ENCODE measurements at regions of chr3 and their contacts with region 1.

Region 1: GRCh38 chr3:55485211-55485791 is 1.8 kb downstream of the WNT5A start:
- DNase-seq: peak in 1 of 2 experiments; percentile 79
- H3K4me3 ChIP-seq: peak overlapping the region; percentile 58; the same call in 1 of the 2 replicates
- H3K27ac ChIP-seq: peak overlapping the region; percentile 73
- H3K4me1 ChIP-seq: peaks cover 6% of the 10 kb centered on the region
- H3K27me3 ChIP-seq: no peaks in the 10 kb centered on the region
- CTCF ChIP-seq: peak; percentile 27

Region 2: DNA sequence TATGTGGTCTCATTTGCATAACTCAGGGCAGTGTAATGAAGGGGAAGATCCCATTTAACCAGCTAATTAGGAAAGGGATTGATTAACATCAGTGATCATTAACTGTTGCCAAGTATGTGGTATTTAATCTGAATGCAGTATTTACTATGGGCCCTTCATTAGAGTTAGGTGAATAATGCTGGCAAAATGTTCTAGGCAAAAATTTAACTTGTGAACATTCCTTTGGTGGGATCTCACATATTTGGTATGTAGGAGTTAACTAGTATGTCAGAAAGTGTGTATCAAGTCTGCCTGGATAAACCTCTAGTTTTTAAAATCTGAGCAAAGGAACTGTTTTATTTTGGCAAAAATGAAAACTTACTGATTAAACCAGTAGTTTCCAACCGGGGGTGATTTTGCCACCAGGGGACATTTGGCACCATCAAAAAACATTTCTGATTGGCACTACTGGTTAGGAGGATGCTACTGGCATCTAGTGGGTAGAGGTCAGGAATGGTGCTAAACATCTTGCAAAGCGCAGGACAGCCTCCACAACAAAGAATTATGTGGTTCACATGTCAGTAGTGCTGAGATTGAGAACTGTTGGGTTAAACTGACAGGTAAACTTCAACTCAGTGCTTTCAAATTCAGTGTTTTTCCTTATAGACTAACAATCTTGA is 579.9 kb before region 1 on chr3:
- CTCF ChIA-PET with region 1: no interaction called
- POLR2A ChIA-PET with region 1: no interaction called
- intact Hi-C with region 1: no loop called
- DNase-seq: no peak
- H3K4me3 ChIP-seq: no peak overlapping the region
- H3K27ac ChIP-seq: no peak overlapping the region
- H3K4me1 ChIP-seq: no peaks in the 10 kb centered on the region
- H3K27me3 ChIP-seq: no peaks in the 10 kb centered on the region
- CTCF ChIP-seq: no peak

Region 3: GRCh38 chr3:54951405-54951804 is 533.9 kb before region 1 on chr3:
- CTCF ChIA-PET with region 1: no interaction called
- POLR2A ChIA-PET with region 1: no interaction called
- intact Hi-C with region 1: loop called (anchors 2 kb)
- DNase-seq: peak in 1 of 2 experiments; percentile 42
- H3K4me3 ChIP-seq: no peak overlapping the region
- H3K27ac ChIP-seq: no peak overlapping the region
- H3K4me1 ChIP-seq: peaks cover 17% of the 10 kb centered on the region
- H3K27me3 ChIP-seq: no peaks in the 10 kb centered on the region
- CTCF ChIP-seq: 0 out of 2 replicates have a peak, but pooled peaks have one; percentile 33

Region 4: GRCh38 chr3:55362210-55362960 is 122.9 kb before region 1 on chr3:
- CTCF ChIA-PET with region 1: no interaction called
- POLR2A ChIA-PET with region 1: interaction called, 7 read pairs
- intact Hi-C with region 1: loop called (anchors 2 kb)
- DNase-seq: peak; percentile 23 to 85
- H3K4me3 ChIP-seq: no peak overlapping the region
- H3K27ac ChIP-seq: peak overlapping the region; percentile 60
- H3K4me1 ChIP-seq: peaks cover 29% of the 10 kb centered on the region
- H3K27me3 ChIP-seq: no peaks in the 10 kb centered on the region
- CTCF ChIP-seq: no peak

Region 5: DNA sequence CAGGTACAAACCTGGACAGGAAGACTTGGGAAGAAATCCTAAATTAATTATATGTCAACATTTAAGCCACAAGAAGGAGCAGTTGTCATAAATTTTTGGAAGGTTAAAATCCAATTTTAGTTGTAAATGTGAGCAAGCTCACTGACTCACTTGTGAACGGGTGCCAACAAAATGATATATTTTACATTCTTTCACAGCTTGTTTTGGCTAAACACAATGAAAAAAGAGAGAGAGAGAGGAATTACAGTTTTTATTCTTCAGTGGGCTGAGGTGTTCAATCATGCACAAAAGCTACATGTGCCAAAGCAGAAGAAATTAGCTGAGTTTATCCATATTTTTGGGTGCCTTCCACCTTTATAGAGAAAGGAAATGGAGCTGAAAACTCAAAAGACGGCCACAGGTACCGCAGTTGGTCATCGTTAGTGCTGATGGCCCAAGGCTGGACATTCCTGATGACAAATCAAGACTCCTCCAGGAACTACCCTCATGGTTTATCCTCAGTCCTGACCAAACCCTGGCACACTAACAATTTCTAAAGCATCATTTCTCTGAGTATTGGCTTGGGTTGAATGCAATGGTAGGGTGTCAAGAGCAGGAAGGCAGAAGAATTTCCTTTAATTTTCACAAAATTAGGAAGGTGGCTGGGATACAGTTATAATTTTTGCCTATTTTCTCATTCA is 39.4 kb after region 1 on chr3:
- CTCF ChIA-PET with region 1: no interaction called
- POLR2A ChIA-PET with region 1: interaction called, 20 read pairs
- intact Hi-C with region 1: no loop called
- DNase-seq: peak; percentile 55 to 76
- H3K4me3 ChIP-seq: no peak overlapping the region
- H3K27ac ChIP-seq: peak overlapping the region; percentile 67
- H3K4me1 ChIP-seq: peaks cover 27% of the 10 kb centered on the region
- H3K27me3 ChIP-seq: no peaks in the 10 kb centered on the region
- CTCF ChIP-seq: no peak

Region 6: DNA sequence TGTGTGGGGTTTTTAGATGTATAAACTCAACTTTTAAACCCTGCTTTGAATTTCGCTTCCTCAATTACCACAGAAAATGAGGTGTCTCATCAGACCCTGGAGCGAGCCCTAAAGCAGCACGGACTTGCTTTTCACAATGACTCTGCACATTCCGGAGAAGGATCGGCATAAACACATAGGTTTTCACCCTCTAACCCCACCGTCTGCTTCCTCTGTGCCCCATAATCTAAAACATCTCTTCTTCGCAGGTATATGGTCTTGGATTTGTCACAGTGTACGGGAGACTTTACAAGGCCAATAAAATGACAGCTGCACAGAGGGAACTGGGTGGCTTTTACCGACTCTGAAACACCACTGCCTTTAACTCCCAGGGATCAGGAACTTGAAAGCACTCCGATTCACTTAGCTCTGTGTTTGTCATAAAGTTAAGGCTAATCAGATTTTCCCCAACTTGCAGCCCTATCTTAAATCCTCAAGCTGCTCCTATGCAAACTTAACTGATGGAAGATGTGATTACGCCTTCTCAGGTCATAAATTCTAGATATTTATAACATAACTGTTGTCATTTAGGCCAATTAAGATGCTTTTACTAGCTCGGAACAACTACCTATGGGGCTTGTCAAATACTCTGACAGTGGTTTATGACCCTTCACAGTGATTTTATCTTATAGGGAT is 135.2 kb after region 1 on chr3:
- CTCF ChIA-PET with region 1: no interaction called
- POLR2A ChIA-PET with region 1: interaction called, 5 read pairs
- intact Hi-C with region 1: loop called (anchors 1 kb)
- DNase-seq: peak; percentile 79 to 95
- H3K4me3 ChIP-seq: peak overlapping the region; percentile 21; the same call in 1 of the 2 replicates
- H3K27ac ChIP-seq: peak overlapping the region; percentile 100
- H3K4me1 ChIP-seq: peaks cover 82% of the 10 kb centered on the region
- H3K27me3 ChIP-seq: no peaks in the 10 kb centered on the region
- CTCF ChIP-seq: no peak

Region 7: DNA sequence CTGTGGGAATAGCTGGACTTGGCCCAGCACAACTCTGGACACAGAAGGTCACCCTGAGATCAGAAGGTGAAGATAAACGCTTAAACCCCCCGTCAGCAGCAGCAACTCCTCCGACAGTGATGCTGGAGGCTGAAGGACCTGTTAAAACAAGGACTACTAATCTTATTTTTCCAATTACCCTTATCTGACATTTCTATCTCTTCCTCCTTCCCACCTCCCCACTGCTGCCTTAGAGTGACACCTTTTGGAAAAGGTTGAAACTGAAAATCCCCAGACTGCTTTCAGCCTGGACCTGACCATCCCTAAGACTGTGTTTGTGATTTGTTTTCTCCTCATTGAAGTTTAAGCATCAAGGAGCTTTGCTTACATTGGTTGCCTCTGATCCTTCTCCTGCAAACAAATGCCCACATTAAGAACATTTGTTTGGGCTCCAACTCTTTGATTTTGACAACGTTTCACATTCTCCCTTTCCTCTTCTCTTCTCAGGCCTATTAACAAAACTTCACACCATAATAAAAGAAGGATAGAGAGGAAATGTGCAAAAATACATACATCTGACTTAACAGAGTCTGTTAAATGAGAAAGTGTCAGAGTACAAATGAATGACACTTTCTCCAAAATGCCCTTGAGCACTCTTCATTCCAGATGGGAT is 412.4 kb after region 1 on chr3:
- CTCF ChIA-PET with region 1: no interaction called
- POLR2A ChIA-PET with region 1: no interaction called
- intact Hi-C with region 1: loop called (anchors 1 kb)
- DNase-seq: peak; percentile 20 to 45
- H3K4me3 ChIP-seq: no peak overlapping the region
- H3K27ac ChIP-seq: no peak overlapping the region
- H3K4me1 ChIP-seq: peaks cover 9% of the 10 kb centered on the region; the same call in 1 of the 2 replicates
- H3K27me3 ChIP-seq: no peaks in the 10 kb centered on the region
- CTCF ChIP-seq: peak; percentile 78

Measured in PC-9 (cell line).